PC-9 (cell line): ENCODE measurements at regions of chr6 and their contacts with region 1.

Region 1: DNA sequence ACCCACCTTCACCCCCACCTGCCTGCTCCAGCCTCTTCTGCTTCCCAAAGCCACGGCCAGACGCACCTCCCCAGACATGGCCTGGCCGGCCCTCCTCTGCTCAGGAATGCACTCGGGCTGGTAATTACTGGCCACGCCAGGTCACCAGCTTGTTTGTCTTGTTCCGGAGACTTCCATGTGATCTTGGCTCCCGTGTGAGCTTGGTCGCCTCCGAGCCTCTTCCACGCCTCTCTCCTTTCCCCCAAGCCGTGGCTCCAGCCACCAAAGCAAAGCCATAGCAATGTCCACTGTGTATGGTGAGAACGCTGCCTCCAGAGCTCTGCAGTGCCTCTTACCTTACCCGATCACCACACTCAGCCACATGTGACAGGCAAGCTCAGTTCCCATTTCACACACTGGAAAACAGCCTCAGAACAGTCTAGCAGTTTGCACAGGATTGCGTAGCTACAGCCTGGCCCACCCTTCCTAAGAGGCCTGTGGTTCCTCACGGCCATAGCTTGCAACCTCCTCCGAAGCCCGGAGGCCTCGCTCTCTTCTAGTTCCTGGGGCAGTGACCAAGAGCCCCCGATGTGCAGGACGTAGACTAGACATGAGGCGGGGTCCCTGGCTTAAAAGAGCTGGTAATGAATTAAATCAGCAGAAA is 48.1 kb upstream of the AFDN start:
- DNase-seq: peak; percentile 57 to 62
- H3K4me3 ChIP-seq: no peak overlapping the region
- H3K27ac ChIP-seq: no peak overlapping the region
- H3K4me1 ChIP-seq: peaks cover 10% of the 10 kb centered on the region
- H3K27me3 ChIP-seq: no peaks in the 10 kb centered on the region
- CTCF ChIP-seq: no peak

Region 2: GRCh38 chr6:167750956-167751386 is 27.6 kb before region 1 on chr6:
- CTCF ChIA-PET with region 1: no interaction called
- POLR2A ChIA-PET with region 1: no interaction called
- intact Hi-C with region 1: loop called (anchors 1 kb)
- DNase-seq: peak; percentile 76 to 97
- H3K4me3 ChIP-seq: no peak overlapping the region
- H3K27ac ChIP-seq: peak overlapping the region; percentile 54
- H3K4me1 ChIP-seq: peaks cover 16% of the 10 kb centered on the region
- H3K27me3 ChIP-seq: no peaks in the 10 kb centered on the region
- CTCF ChIP-seq: no peak